AG04449 (cell line): ENCODE measurements at regions of chr12 and their contacts with region 1.

Region 1: DNA sequence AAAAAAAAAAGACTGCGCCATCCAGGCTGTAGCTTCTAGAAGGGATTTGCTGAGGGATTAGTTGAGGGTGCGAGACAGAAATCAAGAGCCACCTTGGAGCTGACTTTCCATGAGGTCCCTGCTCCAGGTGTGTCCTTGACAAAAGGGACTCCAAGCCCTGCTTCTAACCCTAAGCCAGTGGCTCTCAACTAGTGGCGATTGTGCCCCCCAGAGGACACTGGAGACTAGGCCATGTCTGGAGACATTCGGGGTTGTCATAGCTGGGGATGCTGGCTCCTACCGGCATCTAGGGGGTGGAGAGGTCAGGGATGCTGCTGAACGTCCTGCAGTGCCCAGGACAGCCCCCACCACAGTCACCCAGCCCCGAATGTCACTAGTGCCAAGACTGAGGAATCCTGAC is 40.6 kb downstream of the SPRING1 start:
- DNase-seq: no peak
- H3K4me3 ChIP-seq: no peak overlapping the region
- CTCF ChIP-seq: peak; percentile 40

Region 2: GRCh38 chr12:116708826-116709756 is 11.8 kb after region 1 on chr12:
- CTCF ChIA-PET with region 1: interaction called, 34 read pairs
- POLR2A ChIA-PET with region 1: no interaction called
- DNase-seq: no peak
- H3K4me3 ChIP-seq: peak overlapping the region; percentile 31
- CTCF ChIP-seq: peak; percentile 70

Region 3: DNA sequence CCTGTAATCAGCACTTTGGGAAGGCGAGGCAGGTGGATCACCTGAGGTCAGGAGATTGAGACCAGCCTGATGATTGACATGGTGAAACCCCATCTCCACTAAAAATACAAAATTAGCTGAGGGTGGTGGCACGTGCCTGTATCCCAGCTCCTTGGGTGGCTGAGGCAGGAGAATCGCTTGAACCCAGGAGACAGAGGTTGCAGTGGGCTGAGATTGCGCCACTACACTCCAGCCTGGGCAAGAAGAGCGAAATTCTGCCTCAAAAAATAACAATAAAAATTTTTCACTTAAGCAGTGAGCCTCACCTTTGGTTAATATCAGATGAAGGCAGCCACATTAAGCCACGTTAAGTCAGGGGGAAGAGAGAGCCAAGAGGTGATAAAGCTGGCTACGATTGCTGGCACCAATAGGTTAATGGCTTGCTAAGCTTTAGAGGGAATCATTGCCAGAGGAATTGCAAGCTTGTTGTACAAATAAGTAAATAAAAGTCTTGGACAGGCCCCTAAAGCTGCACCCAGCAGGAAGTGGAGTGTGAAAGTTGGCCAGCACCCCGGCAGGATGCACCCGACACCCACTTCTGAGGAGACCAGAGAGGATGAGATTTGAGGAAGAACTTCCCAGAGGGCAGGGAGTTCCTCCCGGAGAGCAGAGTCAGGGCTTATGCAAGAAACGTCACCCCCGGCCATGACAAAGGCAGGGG is 443.2 kb after region 1 on chr12:
- CTCF ChIA-PET with region 1: no interaction called
- POLR2A ChIA-PET with region 1: no interaction called
- DNase-seq: no peak
- H3K4me3 ChIP-seq: no peak overlapping the region
- CTCF ChIP-seq: no peak